Adrenal gland (tissue), 19 donors: ENCODE measurements at regions of chr7 and their contacts with region 1.

Region 1: GRCh38 chr7:31648288-31648687 is 38.7 kb upstream of the PPP1R17 start:
- DNase-seq: no peak
- H3K4me3 ChIP-seq: no peak overlapping the region
- H3K27ac ChIP-seq: no peak overlapping the region
- H3K4me1 ChIP-seq: no peaks in the 10 kb centered on the region
- H3K27me3 ChIP-seq: no peaks in the 10 kb centered on the region
- CTCF ChIP-seq: peak in 3 of 6 experiments; percentile 29 to 34 (median 30)
- POLR2A ChIP-seq: no peak

Region 2: GRCh38 chr7:31512166-31512565 is 136.1 kb before region 1 on chr7:
- intact Hi-C with region 1: no loop called
- DNase-seq: no peak
- H3K4me3 ChIP-seq: no peak overlapping the region
- H3K27ac ChIP-seq: no peak overlapping the region
- H3K4me1 ChIP-seq: no peaks in the 10 kb centered on the region
- H3K27me3 ChIP-seq: no peaks in the 10 kb centered on the region
- CTCF ChIP-seq: no peak
- POLR2A ChIP-seq: no peak

Region 3: GRCh38 chr7:31595390-31595789 is 52.9 kb before region 1 on chr7:
- intact Hi-C with region 1: loop called in 1 of 2 experiments (anchors 5 kb)
- DNase-seq: no peak
- H3K4me3 ChIP-seq: no peak overlapping the region
- H3K27ac ChIP-seq: no peak overlapping the region
- H3K4me1 ChIP-seq: no peaks in the 10 kb centered on the region
- H3K27me3 ChIP-seq: no peaks in the 10 kb centered on the region
- CTCF ChIP-seq: no peak
- POLR2A ChIP-seq: no peak

Region 4: DNA sequence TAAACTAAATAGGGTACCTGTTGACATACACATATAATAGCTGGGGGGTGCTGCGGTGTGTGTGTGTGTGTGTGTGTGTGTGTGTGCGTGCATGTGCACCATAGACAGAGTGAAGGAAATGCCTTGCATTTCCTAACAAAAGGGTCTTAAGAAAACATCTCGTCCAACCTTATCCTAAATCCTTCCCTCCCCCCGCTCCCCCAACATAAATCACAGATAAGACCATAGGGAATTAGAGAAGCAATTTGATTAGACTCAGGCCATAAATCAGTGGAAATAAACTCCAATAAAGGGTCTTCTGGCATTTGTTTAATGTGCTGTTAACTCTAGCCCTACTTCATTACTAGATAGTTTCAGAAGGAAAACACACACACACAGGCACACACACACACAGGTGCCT is 187.2 kb after region 1 on chr7:
- intact Hi-C with region 1: no loop called
- DNase-seq: no peak
- H3K4me3 ChIP-seq: no peak overlapping the region
- H3K27ac ChIP-seq: no peak overlapping the region
- H3K4me1 ChIP-seq: no peaks in the 10 kb centered on the region
- H3K27me3 ChIP-seq: no peaks in the 10 kb centered on the region
- CTCF ChIP-seq: no peak
- POLR2A ChIP-seq: no peak